ENCODE measurements at regions of chr13 and their contacts with region 1.

Region 1: DNA sequence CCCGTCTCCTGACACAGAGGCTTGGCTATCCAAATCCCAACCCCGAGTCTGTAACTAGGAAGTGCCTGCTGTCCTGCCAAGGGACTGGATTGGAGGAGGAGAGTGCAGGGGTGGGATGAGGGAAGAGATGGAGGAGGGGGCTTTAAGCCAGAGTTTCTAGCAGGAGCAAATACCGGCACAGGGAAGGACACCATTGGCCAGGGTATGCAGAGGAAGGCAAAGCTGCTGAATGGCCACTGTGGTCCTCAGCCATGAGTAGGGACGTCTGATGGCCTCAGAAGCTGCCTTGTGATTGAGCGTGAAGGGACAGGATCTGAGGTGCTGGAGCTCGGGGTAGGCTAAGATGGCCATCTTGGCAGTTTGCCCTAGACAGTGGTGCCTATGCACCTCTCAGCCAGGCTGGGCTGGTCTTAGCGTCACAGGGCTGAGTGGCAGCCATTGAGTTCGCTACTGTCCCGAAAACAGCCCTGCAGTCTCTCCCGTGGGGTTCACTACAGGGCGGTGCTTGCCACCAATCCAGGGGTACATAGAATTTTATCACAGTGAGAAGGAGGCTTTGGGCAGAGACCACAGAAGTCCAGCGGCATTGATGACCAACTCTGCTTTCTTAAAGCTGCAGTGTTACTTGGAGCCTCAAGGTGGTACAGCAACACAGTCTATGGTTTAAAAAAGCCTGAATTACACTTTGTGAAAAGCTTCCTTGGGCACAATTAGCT is 61.8 kb downstream of the AKAP11 start:
- DNase-seq: no peak
- ATAC-seq: peak; percentile 65
- H3K4me3 Mint-ChIP-seq: no peak overlapping the region
- H3K27ac Mint-ChIP-seq: peak overlapping the region; percentile 48
- H3K4me1 Mint-ChIP-seq: peaks cover 59% of the 10 kb centered on the region
- H3K27me3 Mint-ChIP-seq: no peaks in the 10 kb centered on the region

Region 2: DNA sequence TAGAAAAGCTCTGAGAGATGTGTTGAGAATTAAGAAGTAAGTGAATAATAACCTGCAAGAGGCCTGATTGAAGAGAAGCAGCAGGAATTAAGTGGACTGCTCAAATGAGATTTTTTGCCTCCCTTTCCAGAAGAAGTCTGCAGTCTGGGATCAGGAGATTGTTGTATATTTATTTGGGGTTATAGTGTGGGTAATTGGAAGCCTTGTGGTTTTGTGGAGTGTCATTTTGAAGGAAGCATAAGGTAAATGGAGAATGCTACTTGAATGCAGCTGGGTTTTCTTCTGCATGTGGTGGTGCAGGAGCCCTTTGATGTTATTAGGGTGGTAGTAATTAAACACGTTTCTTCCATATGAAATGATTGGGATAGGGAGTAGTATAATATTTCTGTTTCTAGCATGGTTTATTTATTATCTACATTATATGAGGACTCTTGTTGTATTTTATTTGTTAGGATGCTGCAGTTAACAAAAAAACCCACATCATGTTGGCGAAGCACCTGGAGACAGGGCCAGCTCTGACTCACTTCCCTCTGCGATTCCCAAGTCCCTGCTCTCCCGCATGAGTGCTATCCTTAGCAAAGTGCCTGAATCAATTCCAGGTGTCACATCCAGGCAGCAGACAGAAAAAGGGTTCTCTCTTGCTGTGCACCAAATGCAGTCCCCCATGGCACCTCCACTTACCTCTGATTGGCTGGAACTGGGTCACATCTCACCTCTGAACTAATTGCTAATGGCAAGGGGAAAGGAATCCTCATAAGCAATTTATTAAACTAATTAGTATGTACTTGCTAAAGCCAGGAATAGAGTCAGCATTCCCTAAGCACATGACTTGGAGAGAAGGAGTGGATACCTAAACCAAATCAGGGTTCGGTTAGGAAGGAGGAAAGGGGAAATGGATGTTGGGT is 230.6 kb before region 1 on chr13:
- CTCF ChIA-PET with region 1: no interaction called
- POLR2A ChIA-PET with region 1: no interaction called
- DNase-seq: no peak
- ATAC-seq: no peak
- H3K4me3 Mint-ChIP-seq: no peak overlapping the region
- H3K27ac Mint-ChIP-seq: no peak overlapping the region
- H3K4me1 Mint-ChIP-seq: peaks cover 7% of the 10 kb centered on the region
- H3K27me3 Mint-ChIP-seq: no peaks in the 10 kb centered on the region

Region 3: GRCh38 chr13:42258747-42259146 is 75.0 kb before region 1 on chr13:
- CTCF ChIA-PET with region 1: no interaction called
- POLR2A ChIA-PET with region 1: no interaction called
- DNase-seq: no peak
- ATAC-seq: no peak
- H3K4me3 Mint-ChIP-seq: no peak overlapping the region
- H3K27ac Mint-ChIP-seq: no peak overlapping the region
- H3K4me1 Mint-ChIP-seq: peaks cover 12% of the 10 kb centered on the region
- H3K27me3 Mint-ChIP-seq: peaks cover 4% of the 10 kb centered on the region

Region 4: DNA sequence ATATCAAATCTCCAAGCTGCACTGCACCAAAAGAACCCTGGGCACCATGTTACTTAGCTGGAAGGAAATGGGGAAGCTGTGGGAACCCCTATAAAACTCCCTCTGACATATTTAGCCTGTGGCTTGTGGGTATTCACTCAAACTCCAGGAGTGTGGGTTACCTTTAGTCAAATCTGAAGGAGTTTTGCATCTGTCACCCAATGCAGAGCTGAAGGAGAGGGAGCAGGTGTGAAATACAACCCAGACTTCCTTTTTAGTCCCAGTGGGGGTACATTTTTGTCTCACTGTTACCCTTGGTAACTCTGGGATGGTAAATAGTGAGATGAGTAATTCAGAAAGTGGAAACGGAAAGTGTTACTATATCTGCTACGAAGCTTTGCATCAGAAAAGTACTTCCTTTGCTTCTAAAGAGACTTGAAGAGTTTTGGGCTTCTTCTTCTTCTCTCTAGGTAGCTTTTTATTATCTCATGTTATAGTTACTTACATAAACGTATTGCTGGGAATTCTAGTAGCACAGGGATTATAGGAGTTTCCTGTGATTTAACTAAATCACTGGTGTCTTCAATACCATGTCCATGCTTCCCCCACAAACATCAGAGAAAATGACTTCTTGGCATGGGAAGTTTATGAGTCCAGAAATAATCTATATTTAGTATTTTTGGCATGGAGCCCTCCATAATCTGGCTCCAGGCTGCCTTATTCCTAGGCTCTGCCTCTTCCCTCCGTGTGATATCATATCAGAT is 44.0 kb after region 1 on chr13:
- CTCF ChIA-PET with region 1: interaction called, 10 read pairs
- POLR2A ChIA-PET with region 1: interaction called, 3 read pairs
- DNase-seq: peak; percentile 65
- ATAC-seq: peak; percentile 82
- H3K4me3 Mint-ChIP-seq: peak overlapping the region; percentile 30
- H3K27ac Mint-ChIP-seq: peak overlapping the region; percentile 84
- H3K4me1 Mint-ChIP-seq: peaks cover 74% of the 10 kb centered on the region
- H3K27me3 Mint-ChIP-seq: no peaks in the 10 kb centered on the region

Region 5: GRCh38 chr13:42392716-42393572 is 59.2 kb after region 1 on chr13:
- CTCF ChIA-PET with region 1: interaction called, 13 read pairs
- POLR2A ChIA-PET with region 1: interaction called, 4 read pairs
- DNase-seq: peak; percentile 61
- ATAC-seq: peak; percentile 65
- H3K4me3 Mint-ChIP-seq: peak overlapping the region; percentile 49
- H3K27ac Mint-ChIP-seq: peak overlapping the region; percentile 96
- H3K4me1 Mint-ChIP-seq: peaks cover 83% of the 10 kb centered on the region
- H3K27me3 Mint-ChIP-seq: no peaks in the 10 kb centered on the region

Region 6: GRCh38 chr13:42478531-42479156 is 144.9 kb after region 1 on chr13:
- CTCF ChIA-PET with region 1: interaction called, 42 read pairs
- POLR2A ChIA-PET with region 1: interaction called, 5 read pairs
- DNase-seq: peak; percentile 27
- ATAC-seq: no peak
- H3K4me3 Mint-ChIP-seq: no peak overlapping the region
- H3K27ac Mint-ChIP-seq: no peak overlapping the region
- H3K4me1 Mint-ChIP-seq: peaks cover 10% of the 10 kb centered on the region
- H3K27me3 Mint-ChIP-seq: no peaks in the 10 kb centered on the region

Region 7: GRCh38 chr13:42594970-42595571 is 261.3 kb after region 1 on chr13:
- CTCF ChIA-PET with region 1: interaction called, 14 read pairs
- POLR2A ChIA-PET with region 1: no interaction called
- DNase-seq: peak; percentile 72
- ATAC-seq: peak; percentile 51
- H3K4me3 Mint-ChIP-seq: no peak overlapping the region
- H3K27ac Mint-ChIP-seq: no peak overlapping the region
- H3K4me1 Mint-ChIP-seq: no peaks in the 10 kb centered on the region
- H3K27me3 Mint-ChIP-seq: peaks cover 6% of the 10 kb centered on the region